BJ (cell line): ENCODE measurements at regions of chr17 and their contacts with region 1.

Region 1: DNA sequence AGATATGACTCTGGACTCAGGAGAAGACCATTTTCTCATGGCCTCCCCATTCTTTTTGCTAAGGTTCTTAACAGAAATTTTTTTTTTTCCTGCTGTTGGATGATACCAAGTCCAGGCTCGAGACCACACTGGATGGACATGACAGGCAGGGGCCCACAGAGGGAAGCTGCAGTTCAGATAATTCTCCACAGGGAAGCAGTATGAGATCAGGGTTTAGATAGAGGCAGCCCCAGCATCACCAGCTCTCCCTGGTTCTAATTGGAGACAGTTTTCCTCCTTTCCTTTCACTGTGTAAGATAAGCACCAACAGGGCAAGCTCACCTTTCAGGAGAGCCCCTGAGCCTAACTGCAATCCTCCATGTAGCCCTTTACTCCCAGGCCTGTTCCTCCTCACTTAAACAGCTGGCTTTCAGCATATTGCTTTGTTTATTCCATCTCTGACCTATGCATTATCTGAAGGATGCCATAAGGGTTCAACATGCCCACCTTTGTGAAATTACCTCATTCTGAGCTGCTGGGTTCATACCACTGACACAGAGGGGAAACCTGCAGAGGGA is 108.1 kb downstream of the SNX11 start:
- DNase-seq: no peak
- H3K4me3 ChIP-seq: no peak overlapping the region
- H3K27me3 ChIP-seq: peaks cover 20% of the 10 kb centered on the region
- CTCF ChIP-seq: peak; percentile 65

Region 2: GRCh38 chr17:48228721-48229120 is 13.1 kb after region 1 on chr17:
- CTCF ChIA-PET with region 1: interaction called, 13 read pairs
- POLR2A ChIA-PET with region 1: no interaction called
- DNase-seq: no peak
- H3K4me3 ChIP-seq: no peak overlapping the region
- H3K27me3 ChIP-seq: peaks cover 10% of the 10 kb centered on the region
- CTCF ChIP-seq: no peak

Region 3: GRCh38 chr17:48250949-48251348 is 35.3 kb after region 1 on chr17:
- CTCF ChIA-PET with region 1: no interaction called
- POLR2A ChIA-PET with region 1: no interaction called
- DNase-seq: no peak
- H3K4me3 ChIP-seq: no peak overlapping the region
- H3K27me3 ChIP-seq: peaks cover 6% of the 10 kb centered on the region
- CTCF ChIP-seq: no peak

Region 4: GRCh38 chr17:48322060-48322459 is 106.4 kb after region 1 on chr17:
- CTCF ChIA-PET with region 1: no interaction called
- POLR2A ChIA-PET with region 1: no interaction called
- DNase-seq: no peak
- H3K4me3 ChIP-seq: no peak overlapping the region
- H3K27me3 ChIP-seq: peaks cover 10% of the 10 kb centered on the region
- CTCF ChIP-seq: no peak